ENCODE measurements at regions of chr5 and their contacts with region 1.

Region 1: GRCh38 chr5:148626986-148627385 is 27.3 kb downstream of the HTR4 start:
- DNase-seq: no peak
- ATAC-seq: no peak
- H3K4me3 ChIP-seq: no peak overlapping the region
- H3K27ac ChIP-seq: no peak overlapping the region
- H3K4me1 ChIP-seq: no peaks in the 10 kb centered on the region
- H3K27me3 ChIP-seq: no peaks in the 10 kb centered on the region
- CTCF ChIP-seq: no peak
- POLR2A ChIP-seq: no peak
- RAD21 ChIP-seq: no peak

Region 2: GRCh38 chr5:148595697-148596096 is 31.3 kb before region 1 on chr5:
- CTCF ChIA-PET with region 1: no interaction called
- POLR2A ChIA-PET with region 1: no interaction called
- dilution Hi-C with region 1: no loop called
- in situ Hi-C with region 1: no loop called
- intact Hi-C with region 1: no loop called
- DNase-seq: no peak
- ATAC-seq: no peak
- H3K4me3 ChIP-seq: no peak overlapping the region
- H3K27ac ChIP-seq: no peak overlapping the region
- H3K4me1 ChIP-seq: no peaks in the 10 kb centered on the region
- H3K27me3 ChIP-seq: no peaks in the 10 kb centered on the region
- CTCF ChIP-seq: no peak
- POLR2A ChIP-seq: no peak
- RAD21 ChIP-seq: no peak

Region 3: GRCh38 chr5:148653836-148654781 is 27.1 kb after region 1 on chr5 and contains the start of gene HTR4:
- CTCF ChIA-PET with region 1: no interaction called
- POLR2A ChIA-PET with region 1: no interaction called
- dilution Hi-C with region 1: no loop called
- in situ Hi-C with region 1: no loop called
- intact Hi-C with region 1: loop called (anchors 1 kb)
- DNase-seq: no peak
- ATAC-seq: no peak
- H3K4me3 ChIP-seq: no peak within 1 kb of the TSS
- H3K27ac ChIP-seq: no peak within 1 kb of the TSS
- H3K4me1 ChIP-seq: no peaks in the 10 kb centered on the region
- H3K27me3 ChIP-seq: peaks cover 20% of the 10 kb centered on the region
- CTCF ChIP-seq: no peak
- POLR2A ChIP-seq: no peak
- RAD21 ChIP-seq: no peak
- total RNA-seq, gene HTR4: not detected in 2 replicates

Region 4: GRCh38 chr5:148768806-148769415 is 141.9 kb after region 1 on chr5:
- CTCF ChIA-PET with region 1: no interaction called
- POLR2A ChIA-PET with region 1: no interaction called
- dilution Hi-C with region 1: no loop called
- in situ Hi-C with region 1: no loop called
- intact Hi-C with region 1: no loop called
- DNase-seq: no peak
- ATAC-seq: no peak
- H3K4me3 ChIP-seq: no peak overlapping the region
- H3K27ac ChIP-seq: no peak overlapping the region
- H3K4me1 ChIP-seq: no peaks in the 10 kb centered on the region
- H3K27me3 ChIP-seq: peaks cover 10% of the 10 kb centered on the region
- CTCF ChIP-seq: no peak
- POLR2A ChIP-seq: no peak
- RAD21 ChIP-seq: no peak